GM23248 (cell line): ENCODE measurements at regions of chr4 and their contacts with region 1.

Region 1: GRCh38 chr4:36348403-36348938 is 67.1 kb downstream of the DTHD1 start:
- DNase-seq: no peak
- H3K4me3 ChIP-seq: no peak overlapping the region
- H3K27ac ChIP-seq: no peak overlapping the region
- H3K4me1 ChIP-seq: no peaks in the 10 kb centered on the region
- H3K27me3 ChIP-seq: no peaks in the 10 kb centered on the region

Region 2: GRCh38 chr4:37389967-37390580 is 1041.6 kb after region 1 on chr4:
- in situ Hi-C with region 1: loop called (anchors 25 kb)
- DNase-seq: peak; percentile 57
- H3K4me3 ChIP-seq: no peak overlapping the region
- H3K27ac ChIP-seq: no peak overlapping the region
- H3K4me1 ChIP-seq: no peaks in the 10 kb centered on the region
- H3K27me3 ChIP-seq: no peaks in the 10 kb centered on the region; the same call in 1 of the 2 replicates